Thyroid gland (tissue), 4 donors: ENCODE measurements at regions of chr10 and their contacts with region 1.

Region 1: DNA sequence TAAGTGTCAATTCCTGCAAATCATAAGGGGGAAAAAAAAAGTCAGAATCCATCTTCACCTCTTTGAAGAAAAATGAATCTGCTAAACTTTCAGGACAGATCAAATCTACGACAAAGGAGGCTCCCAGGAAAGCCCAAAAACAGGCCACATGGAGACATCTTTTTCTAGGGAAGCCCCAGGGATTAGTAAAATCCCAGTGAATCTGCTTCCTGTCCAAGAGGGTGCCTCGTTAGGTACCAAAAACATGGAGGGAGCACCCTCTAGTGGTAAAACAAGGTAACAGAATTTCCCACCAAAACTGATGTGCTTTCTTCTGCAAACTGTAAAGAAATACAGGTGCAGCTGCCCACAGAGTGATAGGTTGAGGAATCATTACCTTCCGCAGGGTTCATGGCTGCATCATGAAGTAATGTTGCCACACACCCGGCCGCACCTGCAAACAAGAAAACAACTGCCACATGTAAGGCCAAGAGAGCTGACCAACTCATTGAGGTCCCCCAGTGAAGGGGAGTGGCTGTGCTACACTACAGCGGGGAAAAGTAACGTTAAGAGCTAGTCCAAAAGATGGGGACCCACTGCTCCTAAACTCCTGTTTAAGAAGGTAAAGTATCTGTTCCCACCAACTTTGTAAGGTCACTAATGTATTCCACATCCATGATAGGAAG is 7.9 kb downstream of the SLC25A28 start:
- DNase-seq: peak; percentile 2 to 6
- H3K4me3 ChIP-seq: no peak overlapping the region
- H3K27ac ChIP-seq: no peak overlapping the region
- H3K4me1 ChIP-seq: peaks cover 1 to 5% of the 10 kb centered on the region in 2 donors
- H3K27me3 ChIP-seq: no peaks in the 10 kb centered on the region
- CTCF ChIP-seq: peak; percentile 43 to 85 (median 75)
- POLR2A ChIP-seq: no peak

Region 2: DNA sequence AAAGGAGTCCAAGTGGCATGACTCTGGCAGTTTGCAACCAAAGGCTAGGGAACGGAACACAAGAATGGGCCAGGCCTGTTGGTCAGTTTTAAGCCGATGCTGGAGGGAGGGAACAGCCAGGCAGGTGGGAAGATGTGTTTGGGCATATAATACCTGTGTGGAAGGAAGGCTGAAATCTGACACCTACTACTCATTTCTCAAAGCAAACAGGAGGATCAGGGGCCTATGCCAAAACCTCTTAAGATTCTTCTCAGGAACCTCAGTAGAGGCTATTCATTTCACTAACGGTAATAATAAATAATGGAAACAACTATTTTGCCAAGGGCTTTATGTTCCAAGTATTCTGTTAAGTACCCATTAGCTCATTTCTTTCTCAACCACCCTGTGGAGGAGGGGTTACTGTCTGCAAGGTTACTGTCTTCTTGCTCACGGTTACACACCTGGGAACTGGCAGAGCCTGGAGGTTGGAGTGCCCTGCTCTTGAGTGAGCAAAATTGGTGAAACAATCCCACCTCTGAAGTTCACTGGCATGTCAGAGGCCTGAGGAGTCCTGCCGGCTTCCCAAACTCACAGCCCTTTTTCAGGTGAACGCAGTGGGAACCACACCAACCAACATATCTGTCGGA is 217.4 kb before region 1 on chr10:
- intact Hi-C with region 1: loop called (anchors 5 kb)
- DNase-seq: peak; percentile 77 to 82
- H3K4me3 ChIP-seq: no peak overlapping the region
- H3K27ac ChIP-seq: peak overlapping the region in 2 of 3 donors; percentile 30 to 37
- H3K4me1 ChIP-seq: peaks cover 13 to 27% of the 10 kb centered on the region in 2 donors
- H3K27me3 ChIP-seq: no peaks in the 10 kb centered on the region
- CTCF ChIP-seq: no peak
- POLR2A ChIP-seq: peak in 1 of 2 donors; percentile 11

Region 3: DNA sequence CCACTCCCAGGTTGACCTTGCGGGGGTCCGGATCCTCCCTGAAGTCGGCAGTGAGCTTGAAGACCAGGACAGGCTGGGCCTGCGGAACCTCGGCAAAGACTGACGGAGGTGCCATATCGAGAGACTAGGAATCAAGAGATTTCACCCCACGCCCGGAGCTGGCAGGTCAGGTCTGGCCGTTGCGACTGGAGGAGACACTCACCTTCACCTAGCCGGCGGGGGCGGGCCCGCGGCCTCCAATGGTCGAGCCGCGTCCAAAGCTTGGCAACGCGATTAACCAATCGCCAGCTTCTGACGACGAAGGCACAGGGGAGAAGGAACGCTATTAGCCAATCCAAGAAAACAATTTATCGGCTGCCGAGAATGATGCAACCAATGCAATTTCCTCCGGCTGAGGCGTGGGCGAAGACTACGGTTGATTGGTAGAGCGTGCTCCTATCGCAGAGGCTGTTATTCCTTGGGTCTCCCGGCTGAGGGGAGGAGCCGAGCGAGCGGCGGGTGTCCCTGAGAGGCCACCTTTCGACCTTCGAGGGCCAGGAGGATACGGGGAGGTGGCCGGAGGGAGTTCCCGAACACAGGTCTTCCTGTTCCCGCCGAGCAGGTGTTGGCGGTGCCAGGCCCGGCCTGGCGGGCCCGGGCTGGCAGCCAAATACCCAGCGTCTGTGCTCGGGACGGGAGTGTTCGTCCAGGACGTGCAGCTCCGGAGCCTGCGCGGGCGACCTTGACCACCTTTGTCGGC is 181.7 kb before region 1 on chr10 and contains the start of gene GOT1:
- intact Hi-C with region 1: loop called (anchors 5 kb)
- DNase-seq: peak; percentile 98
- H3K4me3 ChIP-seq: peak within 1 kb of the TSS; percentile 53 to 65 (median 56)
- H3K27ac ChIP-seq: peak within 1 kb of the TSS; percentile 95 to 97 (median 96)
- H3K4me1 ChIP-seq: peaks cover 8 to 10% of the 10 kb centered on the region in 2 donors
- H3K27me3 ChIP-seq: no peaks in the 10 kb centered on the region
- CTCF ChIP-seq: no peak
- POLR2A ChIP-seq: peak; percentile 34 to 92
- total RNA-seq, gene GOT1: 19.3 to 57.3 (median 36.7) TPM

Region 4: DNA sequence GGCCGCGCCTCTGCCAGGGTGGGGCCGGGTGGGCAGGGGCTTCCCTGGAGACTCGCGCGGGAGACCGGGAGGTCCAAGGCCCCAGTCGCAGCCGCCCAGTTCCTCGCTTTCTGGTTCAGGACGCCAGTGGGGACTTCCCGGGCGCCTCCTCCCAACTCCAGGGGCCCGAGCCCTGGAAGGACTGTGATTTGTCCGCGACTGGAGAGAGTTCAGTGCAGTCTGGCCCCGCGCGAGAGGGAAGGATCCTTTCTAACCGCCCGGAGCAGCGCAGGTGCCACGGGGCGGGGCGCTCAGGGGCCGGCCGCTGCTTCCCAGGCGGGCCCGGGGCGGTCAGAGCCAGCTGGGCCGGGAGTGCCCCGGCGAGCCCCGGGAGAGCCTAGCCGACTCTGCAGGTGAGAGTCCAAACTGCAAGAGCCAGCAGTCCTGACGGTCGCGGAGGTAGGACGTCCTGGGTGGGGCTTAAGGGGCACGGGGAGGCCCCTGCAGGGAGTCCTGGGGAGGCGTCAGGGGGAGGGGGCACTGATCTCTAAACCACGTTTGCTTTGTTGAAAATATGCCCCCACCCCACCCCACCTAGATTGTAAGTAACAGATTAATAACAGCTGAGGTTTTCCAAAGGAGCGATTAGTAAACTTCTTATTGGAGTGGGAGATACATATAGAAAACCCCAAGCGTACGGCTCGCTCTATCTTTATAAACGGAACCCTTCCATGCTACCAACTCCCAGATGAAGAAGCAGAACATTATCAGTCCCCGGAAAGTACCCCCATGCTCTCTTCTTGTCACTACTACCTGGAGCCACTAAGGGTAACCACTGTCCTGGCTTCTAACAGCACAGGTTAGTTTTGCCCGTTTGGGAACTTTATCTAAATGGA is 71.4 kb before region 1 on chr10:
- intact Hi-C with region 1: no loop called
- DNase-seq: peak; percentile 51 to 68
- H3K4me3 ChIP-seq: peak overlapping the region in 1 of 3 donors; percentile 10
- H3K27ac ChIP-seq: no peak overlapping the region
- H3K4me1 ChIP-seq: peaks cover 10 to 24% of the 10 kb centered on the region in 2 donors
- H3K27me3 ChIP-seq: peaks cover 34% of the 10 kb centered on the region
- CTCF ChIP-seq: peak in 1 of 6 experiments; percentile 15
- POLR2A ChIP-seq: no peak

Region 5: GRCh38 chr10:99711129-99711719 is 98.9 kb after region 1 on chr10:
- intact Hi-C with region 1: no loop called
- DNase-seq: no peak
- H3K4me3 ChIP-seq: no peak overlapping the region
- H3K27ac ChIP-seq: no peak overlapping the region
- H3K4me1 ChIP-seq: peaks cover 3 to 8% of the 10 kb centered on the region in 2 donors
- H3K27me3 ChIP-seq: no peaks in the 10 kb centered on the region
- CTCF ChIP-seq: peak in 2 of 6 experiments; percentile 32 to 41
- POLR2A ChIP-seq: no peak

Region 6: GRCh38 chr10:100508691-100509150 is 896.4 kb after region 1 on chr10:
- intact Hi-C with region 1: no loop called
- DNase-seq: no peak
- H3K4me3 ChIP-seq: no peak overlapping the region
- H3K27ac ChIP-seq: no peak overlapping the region
- H3K4me1 ChIP-seq: no peaks in the 10 kb centered on the region
- H3K27me3 ChIP-seq: no peaks in the 10 kb centered on the region
- CTCF ChIP-seq: peak in 3 of 6 experiments; percentile 8 to 31 (median 15)
- POLR2A ChIP-seq: no peak